RWPE1 (cell line): ENCODE measurements at regions of chr10 and their contacts with region 1.

Region 1: GRCh38 chr10:24193330-24193729 is 15.6 kb upstream of the KIAA1217 start:
- DNase-seq: no peak
- H3K27ac ChIP-seq: no peak overlapping the region
- CTCF ChIP-seq: no peak

Region 2: GRCh38 chr10:23870651-23871610 is 322.4 kb before region 1 on chr10:
- CTCF ChIA-PET with region 1: no interaction called
- POLR2A ChIA-PET with region 1: no interaction called
- DNase-seq: no peak
- H3K27ac ChIP-seq: no peak overlapping the region
- CTCF ChIP-seq: no peak

Region 3: DNA sequence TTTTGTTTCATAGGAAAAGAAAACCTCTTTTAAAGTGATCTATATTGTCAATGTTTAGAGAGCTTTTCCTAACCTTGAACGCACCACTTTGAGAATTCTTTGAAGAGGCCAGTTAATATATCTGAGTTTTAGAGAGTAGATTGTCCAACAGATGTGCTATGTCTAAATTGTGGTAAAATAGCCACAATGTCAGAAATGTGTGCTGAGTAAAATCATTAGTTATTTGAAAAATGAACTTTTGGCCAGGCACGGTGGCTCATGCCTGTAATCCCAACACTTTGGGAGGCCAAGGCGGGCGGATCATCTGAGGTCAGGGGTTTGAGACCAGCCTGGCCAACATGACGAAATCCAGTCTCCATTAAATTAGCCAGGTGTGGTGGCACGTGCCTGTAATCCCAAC is 46.0 kb before region 1 on chr10:
- CTCF ChIA-PET with region 1: interaction called, 11 read pairs
- POLR2A ChIA-PET with region 1: no interaction called
- DNase-seq: no peak
- H3K27ac ChIP-seq: no peak overlapping the region
- CTCF ChIP-seq: no peak

Region 4: DNA sequence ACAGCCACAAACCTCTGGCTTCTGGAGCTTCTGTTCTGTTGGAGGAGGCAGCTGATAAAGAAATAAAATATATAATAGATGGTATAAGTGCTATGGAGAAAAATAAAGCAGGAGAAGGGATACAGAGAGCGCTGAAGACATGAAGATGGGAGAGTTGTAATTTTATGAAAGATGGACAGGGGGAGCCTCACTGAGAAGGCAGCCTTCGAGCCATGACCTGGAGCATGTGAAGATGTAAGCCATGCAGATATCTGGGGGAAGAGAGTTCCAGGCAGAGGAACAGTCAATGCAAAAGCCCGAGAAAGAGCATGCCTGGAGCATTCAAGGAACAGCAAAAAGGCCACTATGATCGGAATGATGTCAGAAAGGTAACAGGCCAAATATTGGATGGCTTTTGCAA is 203.1 kb after region 1 on chr10:
- CTCF ChIA-PET with region 1: no interaction called
- POLR2A ChIA-PET with region 1: no interaction called
- DNase-seq: no peak
- H3K27ac ChIP-seq: no peak overlapping the region
- CTCF ChIP-seq: no peak